ENCODE measurements at regions of chr6 and their contacts with region 1.

Region 1: DNA sequence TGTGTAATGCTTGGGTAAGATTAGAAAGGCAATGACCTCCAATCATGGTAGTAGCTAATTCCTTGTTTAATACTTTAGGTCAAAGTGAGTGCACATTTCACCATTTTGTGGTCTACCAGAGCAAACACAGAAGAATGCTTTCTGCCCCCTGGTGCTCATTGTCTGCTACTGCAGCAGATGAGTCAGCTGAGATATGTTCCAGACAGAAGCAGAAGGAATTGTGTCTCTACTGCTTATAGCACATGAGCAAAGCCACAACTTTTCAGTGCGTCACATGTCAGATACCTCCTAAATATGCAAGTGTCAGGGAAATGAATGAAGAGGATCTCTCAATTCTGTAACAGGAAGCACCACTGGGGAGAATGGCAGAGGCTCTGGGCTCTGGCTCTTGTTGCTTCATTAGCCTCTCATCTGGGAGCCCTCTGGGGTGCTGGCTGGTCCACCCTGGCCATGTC is 308.9 kb downstream of the ALDH8A1 start:
- DNase-seq: peak; percentile 78 to 96 (median 87)
- H3K4me3 ChIP-seq: no peak overlapping the region
- H3K27ac ChIP-seq: peak overlapping the region in 1 of 5 donors; percentile 47
- H3K4me1 ChIP-seq: peaks cover 0 to 5% of the 10 kb centered on the region in 2 donors
- H3K27me3 ChIP-seq: no peaks in the 10 kb centered on the region
- CTCF ChIP-seq: peak; percentile 90 to 99 (median 98)
- POLR2A ChIP-seq: no peak

Region 2: DNA sequence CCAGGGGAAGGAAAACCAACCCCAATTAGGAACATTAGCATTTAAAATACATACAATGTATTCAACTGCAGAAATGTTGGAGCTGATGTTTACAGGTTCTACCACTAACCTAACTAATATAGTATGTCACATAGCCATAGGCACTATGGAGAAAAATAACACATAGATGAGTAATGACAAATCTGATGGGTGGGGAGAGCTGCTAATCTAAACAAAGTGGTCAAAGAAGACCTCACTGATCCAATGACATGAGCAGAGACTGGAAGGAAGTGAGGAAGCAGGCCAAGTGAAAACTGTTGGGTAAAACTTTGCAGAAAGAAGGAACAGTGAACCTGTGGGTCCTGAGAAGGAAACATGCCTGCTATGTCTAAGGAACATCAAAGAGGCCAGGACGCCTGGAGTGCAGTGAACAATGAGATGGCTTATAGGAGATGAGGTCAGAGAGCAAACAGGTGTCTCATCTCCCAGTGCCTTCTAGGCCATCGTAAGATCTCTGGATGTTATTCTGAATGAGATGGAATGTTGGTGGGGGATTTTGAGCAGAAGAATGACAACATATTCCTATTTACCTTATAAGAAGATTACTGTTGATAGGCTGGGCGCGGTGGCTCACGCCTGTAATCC is 173.2 kb after region 1 on chr6:
- intact Hi-C with region 1: loop called in 1 of 2 experiments (anchors 10 kb)
- DNase-seq: no peak
- H3K4me3 ChIP-seq: no peak overlapping the region
- H3K27ac ChIP-seq: no peak overlapping the region
- H3K4me1 ChIP-seq: no peaks in the 10 kb centered on the region
- H3K27me3 ChIP-seq: no peaks in the 10 kb centered on the region
- CTCF ChIP-seq: no peak
- POLR2A ChIP-seq: no peak

Region 3: GRCh38 chr6:134882426-134883038 is 241.5 kb after region 1 on chr6:
- intact Hi-C with region 1: loop called in 1 of 2 experiments (anchors 10 kb)
- DNase-seq: peak; percentile 52 to 95 (median 68)
- H3K4me3 ChIP-seq: no peak overlapping the region
- H3K27ac ChIP-seq: peak overlapping the region in 1 of 5 donors; percentile 28
- H3K4me1 ChIP-seq: no peaks in the 10 kb centered on the region
- H3K27me3 ChIP-seq: no peaks in the 10 kb centered on the region
- CTCF ChIP-seq: peak; percentile 52 to 98 (median 98)
- POLR2A ChIP-seq: no peak